Activated T-helper 1 cell treated with anti-CD3 and anti-CD28 coated beads, Interleukin-12 subunit alpha, Interleukin-12 subunit beta, Interleukin-2, Interleukin-4 antibody, amounts not matched to agents 30 ng/mL and 10 ng/mL and 1 ng/mL, durations not matched to agents 14 hours and 24 hours and 36 hours (primary cell): ENCODE measurements at regions of chr12 and their contacts with region 1.

Region 1: GRCh38 chr12:76183459-76184186 is 99.1 kb upstream of the NAP1L1 start:
- DNase-seq: no peak
- H3K4me3 Mint-ChIP-seq: no peak overlapping the region
- H3K27ac Mint-ChIP-seq: no peak overlapping the region
- H3K4me1 Mint-ChIP-seq: peaks cover 14% of the 10 kb centered on the region
- H3K27me3 Mint-ChIP-seq: peaks cover 36% of the 10 kb centered on the region

Region 2: DNA sequence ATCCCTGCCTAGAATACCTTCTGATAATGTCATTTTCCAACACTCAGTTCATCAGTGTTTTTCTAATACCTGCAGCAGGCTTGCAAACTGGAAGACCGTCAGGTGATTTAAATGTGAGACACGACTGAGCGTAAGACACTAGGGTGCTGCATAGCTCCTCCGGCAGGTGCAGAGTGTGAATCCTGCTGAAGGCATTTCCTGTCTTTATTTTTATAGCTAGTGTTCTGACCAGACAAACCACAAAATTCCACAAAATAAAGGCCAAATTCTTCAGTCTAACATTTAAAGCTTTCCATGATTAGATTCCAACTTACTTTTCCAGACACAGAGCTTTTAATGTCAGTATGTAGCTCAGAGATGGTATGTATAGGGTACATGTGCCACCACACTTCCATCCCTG is 93.9 kb after region 1 on chr12:
- intact Hi-C with region 1: loop called (anchors 2 kb)
- DNase-seq: no peak
- H3K4me3 Mint-ChIP-seq: no peak overlapping the region
- H3K27ac Mint-ChIP-seq: no peak overlapping the region
- H3K4me1 Mint-ChIP-seq: peaks cover 15% of the 10 kb centered on the region
- H3K27me3 Mint-ChIP-seq: peaks cover 6% of the 10 kb centered on the region